PC-9 (cell line): ENCODE measurements at regions of chr14 and their contacts with region 1.

Region 1: GRCh38 chr14:102738756-102739494 is 38.3 kb upstream of the TRAF3 start:
- DNase-seq: no peak
- H3K4me3 ChIP-seq: no peak overlapping the region
- H3K27ac ChIP-seq: no peak overlapping the region
- H3K4me1 ChIP-seq: no peaks in the 10 kb centered on the region
- H3K27me3 ChIP-seq: no peaks in the 10 kb centered on the region
- CTCF ChIP-seq: no peak

Region 2: GRCh38 chr14:102633906-102634595 is 104.9 kb before region 1 on chr14:
- CTCF ChIA-PET with region 1: no interaction called
- POLR2A ChIA-PET with region 1: no interaction called
- intact Hi-C with region 1: no loop called
- DNase-seq: no peak
- H3K4me3 ChIP-seq: no peak overlapping the region
- H3K27ac ChIP-seq: no peak overlapping the region
- H3K4me1 ChIP-seq: peaks cover 14% of the 10 kb centered on the region
- H3K27me3 ChIP-seq: no peaks in the 10 kb centered on the region
- CTCF ChIP-seq: no peak

Region 3: GRCh38 chr14:102774391-102775153 is 35.6 kb after region 1 on chr14:
- CTCF ChIA-PET with region 1: no interaction called
- POLR2A ChIA-PET with region 1: no interaction called
- intact Hi-C with region 1: no loop called
- DNase-seq: peak; percentile 67 to 70
- H3K4me3 ChIP-seq: no peak overlapping the region
- H3K27ac ChIP-seq: no peak overlapping the region
- H3K4me1 ChIP-seq: peaks cover 16% of the 10 kb centered on the region
- H3K27me3 ChIP-seq: no peaks in the 10 kb centered on the region
- CTCF ChIP-seq: peak; percentile 87

Region 4: DNA sequence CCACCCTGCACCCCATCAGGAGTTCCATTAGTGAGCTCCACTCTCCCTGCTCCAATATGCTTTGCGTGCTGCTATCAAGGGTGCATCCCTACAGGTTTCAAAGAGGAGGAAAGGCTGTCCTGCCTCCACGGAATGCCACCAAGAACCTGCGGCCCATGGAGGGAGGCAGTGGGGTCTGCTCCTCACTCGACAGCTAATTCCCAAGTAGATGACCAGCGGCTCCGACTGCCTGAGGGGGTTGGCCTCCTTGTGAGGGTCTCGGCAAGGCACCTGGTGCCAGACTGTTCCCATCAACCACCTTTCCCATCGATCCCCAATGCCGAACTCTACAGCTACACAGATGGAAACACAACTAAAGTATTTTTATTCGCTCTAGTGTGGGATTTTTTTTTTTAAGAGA is 219.5 kb after region 1 on chr14:
- CTCF ChIA-PET with region 1: no interaction called
- POLR2A ChIA-PET with region 1: interaction called, 11 read pairs
- intact Hi-C with region 1: no loop called
- DNase-seq: no peak
- H3K4me3 ChIP-seq: no peak overlapping the region
- H3K27ac ChIP-seq: no peak overlapping the region
- H3K4me1 ChIP-seq: no peaks in the 10 kb centered on the region
- H3K27me3 ChIP-seq: no peaks in the 10 kb centered on the region
- CTCF ChIP-seq: no peak